Psoas muscle (tissue), 8 donors: ENCODE measurements at regions of chr22 and their contacts with region 1.

Region 1: DNA sequence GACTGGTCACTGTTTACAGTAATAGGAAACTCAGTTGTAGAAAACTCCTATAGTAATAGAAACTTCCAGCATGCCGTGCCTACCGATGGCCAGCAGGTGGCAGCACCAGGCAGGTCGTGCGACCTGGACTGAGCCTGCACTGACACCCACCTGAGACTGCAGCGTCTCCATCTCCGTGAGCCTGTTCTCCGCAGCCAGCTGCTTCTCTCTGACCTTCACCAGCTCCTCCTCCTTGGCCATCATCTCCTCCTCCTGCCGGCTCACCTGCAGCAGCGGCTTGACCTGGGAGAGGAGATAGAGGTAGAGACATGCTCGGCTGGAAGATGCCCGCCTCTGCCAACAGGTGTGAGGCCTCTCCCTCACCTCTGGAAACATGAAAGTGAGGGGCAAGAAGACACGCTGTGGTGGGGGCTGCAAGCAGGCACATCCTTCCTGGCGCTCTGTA is 48.5 kb downstream of the APOL1 start:
- DNase-seq: peak; percentile 73 to 86
- ATAC-seq: peak; percentile 72 to 86 (median 80)
- H3K4me3 ChIP-seq: no peak overlapping the region
- H3K27ac ChIP-seq: no peak overlapping the region
- H3K4me1 ChIP-seq: no peaks in the 10 kb centered on the region
- H3K27me3 ChIP-seq: no peaks in the 10 kb centered on the region
- CTCF ChIP-seq: peak; percentile 98

Region 2: DNA sequence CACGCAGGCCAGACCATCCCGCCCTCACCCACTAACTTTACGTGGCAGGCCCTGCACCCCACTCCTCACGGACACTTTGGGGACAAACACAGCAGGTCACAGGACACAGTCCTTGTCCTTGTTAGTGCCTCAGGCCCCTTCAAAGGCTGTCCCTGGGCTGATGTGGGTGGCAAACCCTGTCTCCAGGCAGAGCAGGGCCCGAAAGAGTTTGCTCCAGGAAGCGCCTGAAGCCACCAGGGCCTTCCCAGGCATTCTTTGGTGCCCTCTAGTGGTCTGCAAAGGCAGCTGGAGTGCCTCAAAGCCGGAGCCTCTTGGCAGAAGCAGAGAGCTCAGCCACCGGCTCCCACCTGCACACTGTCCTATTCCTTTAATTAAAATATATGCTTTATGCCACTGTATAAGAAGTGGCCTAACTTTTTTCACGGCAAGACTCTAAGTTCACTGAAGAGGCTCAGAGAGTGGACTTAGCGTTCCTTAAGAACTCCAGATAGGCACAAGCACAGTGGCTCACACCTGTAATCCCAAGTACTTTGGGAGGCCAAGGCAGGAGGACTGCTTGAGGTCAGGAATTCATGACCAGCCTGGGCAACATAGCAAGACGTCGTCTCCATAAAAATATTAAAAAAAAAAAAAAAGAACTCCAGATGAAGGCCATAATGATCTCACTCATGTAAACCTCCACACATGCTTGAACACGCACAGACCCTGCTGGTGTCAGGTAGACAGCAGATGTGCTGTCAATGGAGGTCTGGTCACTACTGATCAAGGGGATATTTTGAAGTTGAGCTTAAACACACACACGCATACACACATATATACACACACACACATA is 169.0 kb after region 1 on chr22:
- intact Hi-C with region 1: loop called (anchors 1 to 2 kb)
- DNase-seq: peak; percentile 76 to 89
- ATAC-seq: peak; percentile 49 to 79 (median 60)
- H3K4me3 ChIP-seq: no peak overlapping the region
- H3K27ac ChIP-seq: peak overlapping the region; percentile 97
- H3K4me1 ChIP-seq: peaks cover 50% of the 10 kb centered on the region
- H3K27me3 ChIP-seq: no peaks in the 10 kb centered on the region
- CTCF ChIP-seq: peak; percentile 97

Region 3: GRCh38 chr22:36486619-36487384 is 185.4 kb after region 1 on chr22:
- intact Hi-C with region 1: loop called in 1 of 2 experiments (anchors 5 kb)
- DNase-seq: no peak
- ATAC-seq: no peak
- H3K4me3 ChIP-seq: no peak overlapping the region
- H3K27ac ChIP-seq: no peak overlapping the region
- H3K4me1 ChIP-seq: peaks cover 4% of the 10 kb centered on the region
- H3K27me3 ChIP-seq: no peaks in the 10 kb centered on the region
- CTCF ChIP-seq: peak; percentile 63